Motor neuron (in vitro differentiated cells): ENCODE measurements at regions of chr14 and their contacts with region 1.

Region 1: GRCh38 chr14:69818757-69819191 is 21.7 kb upstream of the SLC10A1 start:
- ATAC-seq: peak; percentile 79 to 97 (median 86)
- H3K4me3 ChIP-seq: no peak overlapping the region
- H3K27ac ChIP-seq: no peak overlapping the region
- H3K4me1 ChIP-seq: no peaks in the 10 kb centered on the region

Region 2: DNA sequence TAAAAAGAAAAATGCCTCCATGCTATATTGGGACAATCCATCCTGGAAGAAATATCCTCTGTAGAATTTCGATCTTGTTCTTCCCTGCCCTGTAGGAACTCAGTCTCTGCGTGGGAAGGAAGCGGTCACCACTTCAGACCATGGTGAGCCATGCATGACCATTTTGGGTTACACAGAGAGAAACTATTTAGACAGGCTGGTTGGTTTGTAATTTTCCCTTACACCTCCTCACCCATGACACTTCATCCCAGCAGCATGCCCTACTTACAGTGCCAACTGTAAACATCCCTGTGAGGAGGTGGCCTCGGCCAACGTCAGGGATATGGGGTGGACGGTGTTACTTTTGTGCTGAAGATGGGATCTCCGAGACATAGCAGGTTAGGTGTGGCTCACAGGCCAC is 181.8 kb after region 1 on chr14:
- in situ Hi-C with region 1: no loop called
- ATAC-seq: no peak
- H3K4me3 ChIP-seq: no peak overlapping the region
- H3K27ac ChIP-seq: no peak overlapping the region
- H3K4me1 ChIP-seq: peaks cover 0 to 5% of the 10 kb centered on the region in 2 donors

Region 3: GRCh38 chr14:70027785-70028428 is 209.1 kb after region 1 on chr14:
- in situ Hi-C with region 1: loop called in 8 of 9 experiments (anchors 10 to 25 kb)
- ATAC-seq: peak; percentile 69 to 98 (median 92)
- H3K4me3 ChIP-seq: no peak overlapping the region
- H3K27ac ChIP-seq: no peak overlapping the region
- H3K4me1 ChIP-seq: no peaks in the 10 kb centered on the region

Region 4: DNA sequence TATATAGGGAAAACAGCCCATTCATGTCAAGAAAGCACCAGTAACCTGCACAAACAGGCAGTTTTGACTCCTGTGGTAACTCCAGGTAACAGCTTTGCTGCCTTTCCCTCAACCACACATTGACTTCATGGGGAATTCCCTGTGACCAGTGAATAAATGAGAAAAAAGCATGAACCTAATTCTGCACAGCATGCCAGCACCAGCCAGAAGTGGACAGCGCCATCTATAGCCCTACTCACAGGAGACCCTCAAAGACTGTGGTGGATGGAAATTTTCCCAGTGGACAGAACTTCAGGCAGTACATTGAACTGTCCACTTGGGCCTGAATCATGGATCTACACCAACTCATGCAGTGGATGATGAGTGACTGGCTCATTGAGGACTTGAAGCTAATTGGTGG is 217.9 kb after region 1 on chr14:
- in situ Hi-C with region 1: loop called in 4 of 9 experiments (anchors 10 to 25 kb)
- ATAC-seq: peak in 2 of 8 experiments; percentile 26 to 82
- H3K4me3 ChIP-seq: no peak overlapping the region
- H3K27ac ChIP-seq: no peak overlapping the region
- H3K4me1 ChIP-seq: no peaks in the 10 kb centered on the region

Region 5: DNA sequence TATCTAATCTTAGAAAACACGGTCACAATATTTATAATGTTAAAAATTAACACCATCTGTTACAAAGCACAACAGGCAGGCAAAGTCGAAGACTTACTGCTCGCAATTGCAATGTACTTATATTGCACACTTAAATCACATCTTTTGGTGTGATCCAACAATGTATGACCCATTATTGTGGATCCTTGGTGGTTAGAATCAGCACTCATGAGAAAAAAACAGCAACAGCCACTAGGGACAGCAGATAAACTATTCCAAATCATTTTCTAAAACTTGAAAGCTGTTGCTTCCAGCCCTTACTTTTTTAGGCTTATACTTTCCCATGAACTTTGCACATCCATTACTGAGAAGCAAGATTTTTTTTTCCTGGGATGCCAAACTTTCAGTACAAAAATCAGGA is 520.3 kb after region 1 on chr14:
- in situ Hi-C with region 1: loop called in 1 of 9 experiments (anchors 25 kb)
- ATAC-seq: no peak
- H3K4me3 ChIP-seq: no peak overlapping the region
- H3K27ac ChIP-seq: no peak overlapping the region
- H3K4me1 ChIP-seq: no peaks in the 10 kb centered on the region

Region 6: GRCh38 chr14:70567791-70568190 is 749.0 kb after region 1 on chr14:
- in situ Hi-C with region 1: loop called in 1 of 9 experiments (anchors 25 kb)
- ATAC-seq: peak in 3 of 8 experiments; percentile 78 to 88 (median 85)
- H3K4me3 ChIP-seq: no peak overlapping the region
- H3K27ac ChIP-seq: no peak overlapping the region
- H3K4me1 ChIP-seq: no peaks in the 10 kb centered on the region

Region 7: DNA sequence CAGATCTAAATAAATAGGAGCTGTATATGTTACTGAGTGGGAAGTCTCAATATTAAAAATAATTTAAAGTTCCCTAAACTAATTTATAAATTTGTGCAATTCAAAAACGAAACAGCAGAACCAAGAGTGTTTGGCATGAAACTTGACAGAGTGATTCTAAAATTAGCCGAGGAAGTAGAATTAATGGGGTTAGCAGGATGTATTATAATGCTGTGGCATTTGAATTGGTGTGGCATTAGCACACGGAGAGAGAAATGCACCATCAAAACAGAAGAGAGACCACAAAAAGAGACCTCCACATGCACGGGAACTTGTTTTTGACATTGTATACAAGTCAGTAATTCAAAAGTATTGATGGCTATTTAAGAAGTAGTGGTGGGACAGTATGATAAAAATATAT is 1747.5 kb after region 1 on chr14:
- in situ Hi-C with region 1: no loop called
- ATAC-seq: no peak
- H3K4me3 ChIP-seq: no peak overlapping the region
- H3K27ac ChIP-seq: no peak overlapping the region
- H3K4me1 ChIP-seq: no peaks in the 10 kb centered on the region